ENCODE measurements at regions of chr7 and their contacts with region 1.

Region 1: DNA sequence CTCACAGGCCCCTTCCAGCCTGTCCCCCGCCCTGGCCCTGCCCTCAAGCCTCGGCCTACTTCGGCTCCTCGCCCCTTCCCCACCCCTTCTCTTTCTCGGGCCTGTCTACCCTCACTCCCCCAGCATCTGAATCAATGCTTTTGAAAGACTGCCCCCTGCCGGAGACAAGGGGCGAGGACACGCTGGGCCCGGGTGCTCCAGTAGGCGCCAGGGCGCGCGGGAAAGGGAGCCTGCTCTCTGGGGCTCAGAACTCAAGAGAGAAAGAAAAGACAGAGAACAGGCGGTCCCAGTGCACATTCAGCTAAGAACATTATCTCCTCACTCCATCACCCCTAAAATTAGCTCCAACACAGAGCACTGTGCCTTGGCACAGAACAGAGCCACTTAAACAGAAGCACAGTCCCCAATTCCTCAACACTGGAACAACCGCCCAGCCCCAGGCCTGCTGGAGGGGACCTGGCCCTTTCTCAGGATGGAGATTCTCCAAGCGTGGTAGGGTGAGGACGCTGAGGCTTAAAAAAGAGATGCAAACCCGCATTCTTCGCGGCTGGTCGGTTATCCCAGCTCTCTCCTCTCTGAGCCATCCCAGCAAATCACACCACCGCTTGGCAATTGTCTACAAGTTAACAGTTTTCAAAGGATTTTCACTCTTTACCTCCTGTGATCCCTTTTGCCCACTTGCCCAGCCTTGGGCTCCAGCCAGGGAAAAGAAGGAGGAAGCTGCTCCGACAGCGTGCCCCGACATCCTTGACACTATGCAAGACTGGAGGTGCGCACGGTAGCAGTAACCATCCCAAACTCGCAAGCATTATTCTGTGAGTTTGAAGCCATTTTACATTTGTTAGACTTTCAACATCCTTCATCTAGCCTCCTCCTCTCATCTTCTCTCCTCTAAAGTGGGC is 2.1 kb downstream of the GIGYF1 start:
- DNase-seq: peak in 1 of 2 donors; percentile 86
- H3K4me3 ChIP-seq: peak overlapping the region; percentile 92 to 96
- H3K27ac ChIP-seq: peak overlapping the region in 1 of 2 donors; percentile 20
- H3K4me1 ChIP-seq: peaks cover 10 to 30% of the 10 kb centered on the region in 2 donors
- H3K27me3 ChIP-seq: no peaks in the 10 kb centered on the region
- CTCF ChIP-seq: peak; percentile 85 to 97 (median 92)

Region 2: GRCh38 chr7:99504603-99505323 is 1187.2 kb before region 1 on chr7 and contains the start of gene ZKSCAN5:
- intact Hi-C with region 1: no loop called
- DNase-seq: peak; percentile 91 to 99
- H3K4me3 ChIP-seq: peak within 1 kb of the TSS; percentile 75 to 94
- H3K27ac ChIP-seq: peak within 1 kb of the TSS; percentile 83 to 97
- H3K4me1 ChIP-seq: peaks cover 9 to 27% of the 10 kb centered on the region in 2 donors
- H3K27me3 ChIP-seq: no peaks in the 10 kb centered on the region
- CTCF ChIP-seq: no peak
- total RNA-seq, gene ZKSCAN5: 4.4 TPM

Region 3: DNA sequence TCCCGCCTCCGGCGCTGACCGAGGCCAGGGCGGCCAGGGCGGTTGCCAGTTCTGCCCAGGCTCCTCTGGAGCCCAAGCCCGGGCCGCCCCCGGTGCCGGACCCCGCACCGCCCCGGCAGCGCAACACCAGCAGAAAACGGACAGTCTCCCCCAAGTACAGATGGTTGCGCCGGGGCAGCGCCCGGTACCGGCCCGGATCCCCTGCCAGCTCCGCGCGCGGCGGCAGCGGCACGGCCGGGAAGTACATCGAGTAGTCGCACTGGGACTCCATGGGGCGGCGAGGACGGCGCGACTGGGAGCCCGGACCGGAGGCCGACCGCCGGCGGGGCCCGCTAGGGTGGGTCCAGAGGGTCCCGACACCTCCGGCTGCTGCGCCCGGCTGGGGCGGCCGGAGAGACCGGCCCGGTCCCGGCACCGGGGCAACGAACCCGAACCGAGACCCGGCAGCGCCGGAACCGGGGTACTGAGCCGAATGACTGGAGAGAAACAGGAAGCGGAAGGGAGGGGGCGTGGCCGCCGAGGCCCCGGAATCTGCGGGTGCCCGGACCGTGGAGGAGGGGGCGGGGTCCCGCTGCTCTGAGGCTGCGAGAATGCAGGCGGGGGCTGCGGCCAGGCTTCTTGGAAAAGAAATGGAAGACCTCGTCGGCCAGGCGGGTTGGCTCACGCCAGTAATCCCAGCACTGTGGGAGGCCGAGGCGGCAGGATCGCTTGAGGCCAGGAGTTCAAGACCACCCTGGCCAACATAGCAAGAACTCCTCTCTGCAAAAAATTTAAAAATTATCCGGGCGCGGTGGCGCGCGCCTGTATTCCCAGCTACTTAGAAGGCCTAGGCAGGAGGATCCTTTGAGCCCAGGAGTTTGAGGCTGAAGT is 533.5 kb before region 1 on chr7 and contains the start of gene TRAPPC14:
- intact Hi-C with region 1: loop called (anchors 10 kb)
- DNase-seq: peak; percentile 61 to 96
- H3K4me3 ChIP-seq: peak within 1 kb of the TSS; percentile 67 to 92
- H3K27ac ChIP-seq: peak within 1 kb of the TSS; percentile 79 to 83
- H3K4me1 ChIP-seq: peaks cover 0 to 13% of the 10 kb centered on the region in 2 donors
- H3K27me3 ChIP-seq: no peaks in the 10 kb centered on the region
- CTCF ChIP-seq: no peak
- total RNA-seq, gene TRAPPC14: 22.0 TPM

Region 4: GRCh38 chr7:100469227-100470044 is 222.5 kb before region 1 on chr7:
- intact Hi-C with region 1: loop called (anchors 5 kb)
- DNase-seq: peak in 1 of 2 donors; percentile 90
- H3K4me3 ChIP-seq: no peak overlapping the region
- H3K27ac ChIP-seq: no peak overlapping the region
- H3K4me1 ChIP-seq: peaks cover 17 to 26% of the 10 kb centered on the region in 2 donors
- H3K27me3 ChIP-seq: no peaks in the 10 kb centered on the region
- CTCF ChIP-seq: peak; percentile 87 to 97 (median 95)

Region 5: DNA sequence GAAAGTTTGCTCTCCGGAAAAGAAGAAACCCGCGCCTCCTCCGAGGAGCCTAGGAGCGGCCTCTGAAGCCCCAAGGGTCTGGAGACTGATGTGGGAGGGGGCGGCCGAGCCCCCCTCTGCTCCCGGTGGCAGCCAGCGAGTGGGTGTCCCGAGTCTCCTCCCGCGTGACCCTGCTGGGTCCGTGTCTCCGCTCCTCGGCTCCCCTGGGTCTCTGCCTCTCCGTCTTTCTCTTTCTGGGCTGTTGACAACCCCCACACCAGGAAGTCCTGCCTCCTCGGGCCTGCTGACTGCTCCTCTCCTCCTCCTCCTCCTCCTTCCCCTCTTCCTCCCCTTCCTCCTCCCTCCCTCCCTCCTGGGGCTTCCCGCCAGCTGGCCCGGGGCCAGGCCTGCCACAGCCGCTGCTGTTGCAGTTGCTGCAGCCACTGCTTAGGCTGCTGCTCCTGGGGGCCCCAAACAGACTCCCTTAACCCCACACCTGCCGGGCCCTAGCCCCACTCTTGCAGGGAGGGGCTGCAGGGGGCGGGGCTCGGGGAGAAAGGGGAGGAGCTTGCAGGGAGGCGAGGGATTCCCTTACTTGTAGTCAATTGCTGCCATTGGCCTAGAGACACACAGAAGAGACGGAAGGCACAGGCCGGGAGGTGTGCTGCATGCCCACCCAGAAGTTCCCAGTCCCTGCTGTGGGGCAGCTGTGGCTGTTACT is 212.8 kb before region 1 on chr7 and contains the start of gene TSC22D4:
- intact Hi-C with region 1: loop called (anchors 5 kb)
- DNase-seq: peak; percentile 77 to 95
- H3K4me3 ChIP-seq: peak within 1 kb of the TSS; percentile 90 to 92
- H3K27ac ChIP-seq: peak within 1 kb of the TSS; percentile 85 to 87
- H3K4me1 ChIP-seq: peaks cover 25 to 39% of the 10 kb centered on the region in 2 donors
- H3K27me3 ChIP-seq: no peaks in the 10 kb centered on the region
- CTCF ChIP-seq: no peak
- total RNA-seq, gene TSC22D4: 68.2 TPM

Region 6: GRCh38 chr7:100563809-100564400 is 128.0 kb before region 1 on chr7:
- intact Hi-C with region 1: loop called (anchors 1 kb)
- DNase-seq: peak in 1 of 2 donors; percentile 89
- H3K4me3 ChIP-seq: no peak overlapping the region
- H3K27ac ChIP-seq: no peak overlapping the region
- H3K4me1 ChIP-seq: no peaks in the 10 kb centered on the region
- H3K27me3 ChIP-seq: no peaks in the 10 kb centered on the region
- CTCF ChIP-seq: peak; percentile 90 to 97 (median 95)

Region 7: DNA sequence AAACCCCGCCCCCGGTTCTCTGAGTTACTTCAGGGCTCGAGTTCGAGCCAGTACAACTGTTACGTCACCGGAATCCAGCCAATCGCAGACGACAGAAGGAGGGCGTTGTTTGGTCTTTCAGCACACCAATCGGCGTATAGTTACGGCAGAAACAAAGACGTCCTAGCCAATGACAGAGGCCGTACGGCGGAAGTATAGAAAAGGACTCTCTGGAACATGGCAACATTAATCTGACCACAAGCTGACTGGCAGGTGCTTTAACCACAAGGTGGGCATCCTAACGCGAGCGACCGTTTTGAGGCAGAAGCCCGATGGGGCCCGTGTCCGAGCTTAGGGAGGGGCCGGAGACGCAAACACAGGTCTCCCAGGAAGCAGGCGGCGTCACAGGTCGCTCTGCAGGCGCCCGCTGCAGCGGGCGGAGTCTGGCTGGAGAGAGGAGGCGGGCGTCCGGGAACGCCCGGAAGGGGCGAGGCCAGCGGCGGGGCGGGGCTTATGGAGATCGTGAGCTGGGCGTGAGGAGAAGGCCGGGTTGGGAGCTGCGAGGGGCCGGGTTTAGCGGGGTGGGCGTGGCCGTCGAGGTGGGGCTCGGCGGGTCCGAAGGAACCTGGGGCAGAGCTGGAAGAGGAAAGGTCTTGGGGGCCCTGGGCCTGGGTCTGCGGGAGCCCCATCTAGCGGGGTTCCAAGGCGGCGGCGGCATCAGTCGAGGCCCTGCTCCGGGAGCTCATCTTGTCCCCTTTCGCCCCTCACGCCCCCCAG is 79.8 kb before region 1 on chr7 and contains the start of gene MOSPD3:
- intact Hi-C with region 1: loop called (anchors 5 kb)
- DNase-seq: peak; percentile 95 to 100
- H3K4me3 ChIP-seq: peak within 1 kb of the TSS; percentile 84 to 93
- H3K27ac ChIP-seq: peak within 1 kb of the TSS; percentile 86 to 88
- H3K4me1 ChIP-seq: peaks cover 3 to 11% of the 10 kb centered on the region in 2 donors
- H3K27me3 ChIP-seq: no peaks in the 10 kb centered on the region
- CTCF ChIP-seq: no peak
- total RNA-seq, gene MOSPD3: 11.0 TPM

Region 8: DNA sequence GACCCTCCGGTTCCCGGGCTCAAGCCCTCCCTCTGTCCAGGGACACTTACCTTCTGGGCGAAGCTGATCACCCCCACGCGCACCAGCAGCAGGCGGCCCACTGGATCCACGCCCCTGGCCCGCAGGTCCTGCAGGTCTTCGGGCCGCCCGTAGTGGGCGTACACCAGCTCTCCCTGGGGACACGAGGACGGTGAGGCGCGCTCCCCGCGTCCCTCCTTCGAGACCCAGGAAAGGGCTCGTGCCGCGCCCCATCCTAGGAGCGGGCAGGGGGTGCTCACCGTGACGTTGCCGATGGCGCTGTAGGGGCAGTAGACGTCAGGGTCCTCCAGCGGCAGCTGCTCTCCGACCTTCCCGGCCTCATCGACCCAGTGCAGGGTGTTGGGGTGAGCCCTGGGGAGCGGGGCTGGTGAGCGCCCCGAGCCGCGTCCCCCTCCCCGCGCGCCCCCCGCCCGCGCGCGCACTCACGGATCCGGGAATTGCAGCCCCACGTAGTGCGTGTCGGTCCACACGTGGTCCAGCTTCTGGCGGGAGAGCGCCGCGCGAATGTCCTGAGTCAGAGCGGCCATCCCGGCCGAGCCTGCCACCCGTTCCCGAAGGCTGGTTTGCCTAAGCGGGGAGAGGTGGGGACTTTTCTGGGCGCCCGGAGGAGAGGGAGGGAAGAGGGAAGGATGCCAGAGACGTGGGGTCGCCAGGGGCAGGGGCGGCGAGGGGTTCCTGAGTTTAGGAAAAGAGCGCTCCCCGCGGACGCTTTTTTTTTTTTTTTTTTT is 58.8 kb before region 1 on chr7:
- intact Hi-C with region 1: loop called (anchors 5 kb)
- DNase-seq: no peak
- H3K4me3 ChIP-seq: peak overlapping the region; percentile 61 to 62
- H3K27ac ChIP-seq: no peak overlapping the region
- H3K4me1 ChIP-seq: peaks cover 0 to 8% of the 10 kb centered on the region in 2 donors
- H3K27me3 ChIP-seq: peaks cover 5% of the 10 kb centered on the region
- CTCF ChIP-seq: peak in 1 of 3 experiments; percentile 36